Endothelial cell of umbilical vein (primary cell): ENCODE measurements at regions of chr6 and their contacts with region 1.

Region 1: DNA sequence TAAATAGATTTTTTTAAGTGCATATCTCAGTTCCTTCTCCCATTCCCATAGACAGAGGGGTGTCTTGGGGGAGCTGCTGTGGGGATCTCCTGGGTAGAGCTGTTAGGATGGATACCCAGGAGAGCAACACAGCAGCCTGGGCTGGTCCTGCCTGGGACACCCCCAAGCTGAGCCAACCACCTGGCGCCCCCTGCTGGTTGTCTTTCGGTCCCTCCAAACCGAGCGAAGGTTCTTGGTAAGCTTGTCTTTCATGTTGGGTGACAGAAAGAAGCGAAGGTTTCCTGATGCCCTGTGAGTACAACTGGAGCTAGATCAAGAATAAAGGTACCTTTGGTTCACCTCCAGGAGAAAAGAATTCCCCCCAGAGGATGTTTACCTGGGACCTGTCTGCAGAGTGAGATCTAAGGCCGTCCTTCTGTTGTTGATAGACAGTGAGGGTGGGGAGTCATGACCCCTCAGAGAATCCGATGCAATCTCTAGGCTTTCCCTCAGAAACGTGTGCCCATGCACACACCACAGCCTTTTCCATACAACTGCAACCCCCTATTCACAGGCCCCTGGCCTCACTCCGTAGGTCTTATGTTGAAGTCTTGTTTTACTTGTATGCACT is 50.8 kb downstream of the SNX9 start:
- DNase-seq: peak; percentile 79
- H3K4me3 ChIP-seq: no peak overlapping the region
- H3K27ac ChIP-seq: no peak overlapping the region
- H3K4me1 ChIP-seq: peaks cover 10% of the 10 kb centered on the region
- H3K27me3 ChIP-seq: no peaks in the 10 kb centered on the region
- CTCF ChIP-seq: peak; percentile 79 to 87
- POLR2A ChIP-seq: no peak

Region 2: DNA sequence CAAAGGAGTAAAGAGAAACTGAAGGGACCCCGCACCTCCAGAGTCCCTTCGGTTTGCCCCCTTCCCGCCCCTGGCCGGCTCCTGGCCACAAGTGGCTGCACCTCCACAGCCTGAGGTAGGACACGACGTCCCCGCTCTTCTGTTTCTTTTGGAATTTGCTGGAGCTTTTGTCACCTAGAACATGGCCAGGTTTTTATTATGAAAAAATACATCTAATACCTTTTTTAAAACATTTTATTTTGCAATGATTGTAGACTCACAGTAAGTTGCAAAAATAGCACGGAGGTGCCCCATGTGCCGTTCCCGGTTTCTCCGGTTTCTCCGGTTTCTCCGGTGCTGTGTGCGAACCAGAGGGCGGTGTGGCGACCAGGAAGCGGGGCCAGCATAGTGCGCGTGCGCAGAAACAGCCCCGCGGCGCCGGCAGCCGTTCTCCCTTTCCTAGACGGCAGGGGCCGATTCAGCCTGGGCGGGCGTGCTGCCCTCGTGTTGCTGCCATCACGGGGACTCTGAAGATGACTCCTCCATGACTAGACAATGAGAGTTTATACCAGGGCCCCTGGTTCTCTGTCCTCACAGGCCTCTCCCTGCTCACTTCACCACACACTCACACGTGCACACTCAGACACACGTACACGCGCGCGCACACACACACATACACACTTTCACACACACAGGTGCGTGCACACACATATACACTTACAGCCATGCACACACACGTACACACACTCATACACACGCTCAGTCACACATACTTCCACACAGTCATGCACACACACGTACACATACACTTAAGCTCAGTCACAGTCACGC is 652.6 kb before region 1 on chr6:
- CTCF ChIA-PET with region 1: no interaction called
- POLR2A ChIA-PET with region 1: no interaction called
- dilution Hi-C with region 1: no loop called
- intact Hi-C with region 1: no loop called
- DNase-seq: peak; percentile 77
- H3K4me3 ChIP-seq: peak overlapping the region; percentile 1 to 34 (median 18)
- H3K27ac ChIP-seq: no peak overlapping the region
- H3K4me1 ChIP-seq: peaks cover 14% of the 10 kb centered on the region
- H3K27me3 ChIP-seq: no peaks in the 10 kb centered on the region
- CTCF ChIP-seq: peak in 1 of 2 donors; percentile 26
- POLR2A ChIP-seq: peak; percentile 66

Region 3: DNA sequence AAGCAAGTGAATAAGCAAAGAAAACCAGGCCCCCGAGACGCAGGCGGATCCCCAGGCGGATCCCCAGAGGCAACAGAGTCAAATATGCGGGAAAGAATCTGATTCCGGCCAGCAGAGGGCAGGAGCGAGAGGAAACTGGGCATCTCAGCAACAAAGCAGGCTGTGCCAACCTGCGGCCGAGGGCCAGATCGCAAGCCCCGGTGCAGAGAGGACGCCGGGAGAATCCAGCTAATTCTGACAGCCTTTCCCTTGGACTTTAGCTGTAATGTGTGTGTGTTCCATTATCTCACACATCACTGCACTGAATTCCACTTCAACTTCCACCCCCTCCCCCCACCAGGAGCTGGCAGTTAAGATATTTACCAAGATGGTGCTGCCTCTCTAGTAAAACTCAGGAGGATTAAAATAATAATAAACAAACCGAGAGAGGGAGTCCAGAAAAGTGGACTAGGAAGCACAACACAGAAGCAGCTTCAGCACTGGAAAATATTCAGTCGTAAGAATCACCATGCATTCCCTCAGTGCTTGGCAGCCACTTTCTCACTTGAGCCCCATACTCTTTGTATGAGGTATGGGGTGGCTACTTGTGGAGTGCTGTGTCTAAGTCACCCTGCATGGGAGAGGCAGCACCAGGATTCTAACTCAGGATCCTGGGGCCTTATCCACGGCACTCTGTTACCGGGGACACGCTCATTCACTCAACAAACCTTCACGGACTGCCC is 117.0 kb before region 1 on chr6:
- CTCF ChIA-PET with region 1: interaction called, 235 read pairs
- POLR2A ChIA-PET with region 1: no interaction called
- dilution Hi-C with region 1: no loop called
- intact Hi-C with region 1: loop called (anchors 1 kb)
- DNase-seq: peak; percentile 88
- H3K4me3 ChIP-seq: no peak overlapping the region
- H3K27ac ChIP-seq: peak overlapping the region; percentile 3
- H3K4me1 ChIP-seq: peaks cover 47% of the 10 kb centered on the region
- H3K27me3 ChIP-seq: no peaks in the 10 kb centered on the region
- CTCF ChIP-seq: peak; percentile 80 to 83
- POLR2A ChIP-seq: no peak

Region 4: GRCh38 chr6:157823001-157823527 is 50.8 kb before region 1 on chr6 and contains the start of gene SNX9:
- CTCF ChIA-PET with region 1: interaction called, 8 read pairs
- POLR2A ChIA-PET with region 1: no interaction called
- dilution Hi-C with region 1: no loop called
- intact Hi-C with region 1: loop called (anchors 1 kb)
- DNase-seq: peak; percentile 65
- H3K4me3 ChIP-seq: peak within 1 kb of the TSS; percentile 50 to 99 (median 89)
- H3K27ac ChIP-seq: peak within 1 kb of the TSS; percentile 86
- H3K4me1 ChIP-seq: peaks cover 32% of the 10 kb centered on the region
- H3K27me3 ChIP-seq: no peaks in the 10 kb centered on the region
- CTCF ChIP-seq: no peak
- POLR2A ChIP-seq: peak; percentile 55
- total RNA-seq, gene SNX9: 51.4 and 54.5 TPM in 2 replicates

Region 5: DNA sequence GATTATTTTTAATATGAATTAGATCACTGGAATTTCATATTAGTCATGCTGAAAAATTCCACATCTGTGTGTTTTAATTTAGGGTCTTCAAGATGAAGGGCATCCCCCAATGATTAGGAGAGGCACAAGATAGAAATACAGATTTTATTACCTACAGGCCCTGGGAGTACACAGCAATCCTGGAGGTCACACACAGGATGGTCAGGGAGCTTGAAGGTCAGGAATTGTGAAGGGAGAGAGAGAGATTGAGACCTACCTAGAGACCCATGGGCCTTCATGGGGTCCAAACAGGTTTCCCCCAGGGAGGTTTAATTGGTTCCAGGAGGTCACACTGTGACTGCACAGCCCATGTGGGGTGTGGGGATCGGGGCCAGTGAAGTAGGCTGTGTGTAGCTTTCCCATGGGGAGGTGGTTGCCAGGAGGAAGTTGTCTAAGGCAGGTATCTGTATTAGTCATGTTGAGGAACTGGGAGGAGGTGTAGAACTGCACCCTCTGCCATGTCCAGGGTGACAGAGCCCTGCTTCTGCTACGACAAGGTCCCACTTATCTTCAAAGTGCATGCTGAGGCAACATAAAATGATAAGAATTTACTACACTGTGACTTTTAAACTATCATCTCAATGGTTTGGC is 32.5 kb before region 1 on chr6:
- CTCF ChIA-PET with region 1: interaction called, 22 read pairs
- POLR2A ChIA-PET with region 1: interaction called, 6 read pairs
- dilution Hi-C with region 1: no loop called
- intact Hi-C with region 1: no loop called
- DNase-seq: no peak
- H3K4me3 ChIP-seq: no peak overlapping the region
- H3K27ac ChIP-seq: no peak overlapping the region
- H3K4me1 ChIP-seq: peaks cover 28% of the 10 kb centered on the region
- H3K27me3 ChIP-seq: no peaks in the 10 kb centered on the region
- CTCF ChIP-seq: no peak
- POLR2A ChIP-seq: no peak

Region 6: GRCh38 chr6:157946865-157947532 is 73.2 kb after region 1 on chr6:
- CTCF ChIA-PET with region 1: no interaction called
- POLR2A ChIA-PET with region 1: no interaction called
- dilution Hi-C with region 1: no loop called
- intact Hi-C with region 1: no loop called
- DNase-seq: no peak
- H3K4me3 ChIP-seq: no peak overlapping the region
- H3K27ac ChIP-seq: no peak overlapping the region
- H3K4me1 ChIP-seq: no peaks in the 10 kb centered on the region
- H3K27me3 ChIP-seq: no peaks in the 10 kb centered on the region
- CTCF ChIP-seq: peak in 1 of 2 donors; percentile 14
- POLR2A ChIP-seq: no peak